OCI-LY7 (cell line): ENCODE measurements at regions of chr12 and their contacts with region 1.

Region 1: DNA sequence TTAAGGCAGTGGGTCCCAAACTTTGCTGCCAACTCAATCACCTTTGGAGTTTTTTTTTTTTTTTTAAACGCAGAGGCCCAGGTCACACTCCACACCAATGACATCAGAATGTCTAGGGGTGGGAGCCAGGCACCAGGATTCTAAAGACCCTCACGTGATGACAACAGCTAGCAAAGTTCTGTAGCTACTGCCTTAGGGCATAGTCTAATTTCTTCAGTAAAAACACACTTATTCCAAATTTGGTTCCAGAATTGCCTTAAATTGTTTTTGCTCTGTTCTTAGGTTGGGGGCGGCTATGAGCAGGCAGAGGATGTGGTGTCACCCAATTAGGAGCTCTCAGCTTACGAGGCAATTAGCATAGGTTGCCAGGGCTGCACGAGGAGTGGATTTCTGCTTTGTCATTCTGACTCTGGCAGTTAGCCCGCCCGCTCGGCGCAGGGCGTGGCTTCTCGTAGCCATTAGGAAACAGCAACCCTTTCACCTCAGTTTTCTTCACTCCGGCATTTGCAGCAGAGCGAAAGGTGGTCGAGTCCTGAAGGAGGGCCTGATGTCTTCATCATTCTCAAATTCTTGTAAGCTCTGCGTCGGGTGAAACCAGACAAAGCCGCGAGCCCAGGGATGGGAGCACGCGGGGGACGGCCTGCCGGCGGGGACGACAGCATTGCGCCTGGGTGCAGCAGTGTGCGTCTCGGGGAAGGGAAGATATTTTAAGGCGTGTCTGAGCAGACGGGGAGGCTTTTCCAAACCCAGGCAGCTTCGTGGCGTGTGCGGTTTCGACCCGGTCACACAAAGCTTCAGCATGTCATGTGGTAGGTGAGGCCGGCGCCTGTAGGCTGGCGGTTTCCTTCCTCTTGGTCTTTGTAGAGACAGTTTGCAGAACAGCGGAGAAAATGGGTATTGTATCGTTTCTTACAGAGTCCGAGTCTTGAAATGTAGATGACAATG is 16.7 kb upstream of the EID3 start:
- DNase-seq: peak; percentile 98
- H3K4me3 ChIP-seq: peak overlapping the region; percentile 99
- H3K27ac ChIP-seq: peak overlapping the region; percentile 95
- H3K4me1 ChIP-seq: peaks cover 27% of the 10 kb centered on the region
- CTCF ChIP-seq: 0 out of 2 replicates have a peak, but pooled peaks have one; percentile 18

Region 2: DNA sequence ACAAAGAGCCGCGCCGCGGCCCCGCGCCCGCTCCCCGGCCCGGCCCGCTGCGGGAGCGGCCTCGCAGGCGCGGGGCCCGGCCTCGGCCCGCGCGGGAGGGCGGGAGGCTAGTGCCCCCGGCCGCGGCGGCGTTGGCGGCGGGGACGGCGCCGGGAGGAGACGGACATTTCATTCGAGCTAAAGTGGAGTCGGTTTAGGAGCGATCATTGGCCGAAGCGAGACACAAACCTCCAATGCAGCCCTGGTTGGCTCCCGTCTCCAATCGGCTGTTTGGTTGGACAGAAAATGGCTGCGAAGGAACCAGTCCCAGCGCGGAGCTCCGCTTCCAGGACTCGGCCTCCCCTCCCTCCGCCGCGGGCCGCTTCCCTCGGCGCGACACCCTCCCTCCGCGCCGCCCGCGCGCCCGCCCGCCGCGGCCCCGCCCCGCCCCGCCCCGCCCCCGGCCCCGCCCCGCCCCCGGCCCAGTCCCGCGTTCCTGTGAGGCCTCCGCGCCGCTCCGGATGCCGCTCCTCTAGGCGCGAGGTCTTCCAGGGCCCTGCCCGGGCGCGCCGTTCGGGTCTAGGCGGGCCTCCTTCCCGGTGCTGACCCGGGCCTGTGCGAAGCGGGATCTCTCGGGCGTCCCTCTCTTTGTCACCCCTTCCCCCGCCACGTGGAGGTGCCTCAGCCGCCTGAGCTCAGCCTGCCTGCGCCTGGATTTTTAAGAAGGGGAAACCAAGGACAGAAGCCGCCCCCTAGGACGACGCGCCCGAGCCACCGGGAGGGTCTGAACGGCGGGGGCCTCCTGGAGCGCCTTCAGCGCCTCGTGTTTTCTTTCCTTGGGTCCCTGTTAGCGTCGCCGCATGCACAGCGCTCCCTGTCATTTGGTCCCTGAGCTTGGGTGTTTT is 148.7 kb before region 1 on chr12 and contains the start of gene NFYB:
- CTCF ChIA-PET with region 1: interaction called, 3 read pairs
- POLR2A ChIA-PET with region 1: interaction called, 6 read pairs
- intact Hi-C with region 1: loop called (anchors 1 kb)
- DNase-seq: peak; percentile 97
- H3K4me3 ChIP-seq: peak within 1 kb of the TSS; percentile 88
- H3K27ac ChIP-seq: peak within 1 kb of the TSS; percentile 82
- H3K4me1 ChIP-seq: peaks cover 31% of the 10 kb centered on the region
- CTCF ChIP-seq: no peak
- total RNA-seq, gene NFYB: 21.6 and 30.2 TPM in 2 replicates

Region 3: DNA sequence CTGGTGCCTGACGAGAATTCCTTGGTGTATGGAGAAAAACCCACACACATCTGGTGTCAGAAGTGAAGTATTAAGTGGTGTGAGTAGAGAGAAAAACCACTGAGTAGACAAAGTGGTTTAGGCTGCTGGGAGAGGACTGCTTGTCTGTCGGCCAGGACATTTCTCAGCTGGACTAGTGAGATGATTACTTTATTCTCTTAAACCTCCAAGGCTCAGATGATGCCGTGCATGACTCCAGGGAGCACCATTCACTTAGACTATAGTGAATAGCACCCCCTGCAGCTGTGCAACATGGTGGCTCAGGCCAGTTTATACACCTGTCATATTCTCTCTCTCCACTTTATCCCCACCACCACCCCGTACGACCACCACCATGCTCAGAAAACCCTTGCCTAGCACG is 120.3 kb before region 1 on chr12:
- CTCF ChIA-PET with region 1: no interaction called
- POLR2A ChIA-PET with region 1: no interaction called
- intact Hi-C with region 1: no loop called
- DNase-seq: no peak
- H3K4me3 ChIP-seq: no peak overlapping the region
- H3K27ac ChIP-seq: no peak overlapping the region
- H3K4me1 ChIP-seq: no peaks in the 10 kb centered on the region
- CTCF ChIP-seq: no peak

Region 4: GRCh38 chr12:104215638-104216297 is 71.0 kb before region 1 on chr12 and contains the start of gene TXNRD1:
- CTCF ChIA-PET with region 1: no interaction called
- POLR2A ChIA-PET with region 1: no interaction called
- intact Hi-C with region 1: no loop called
- DNase-seq: peak; percentile 47
- H3K4me3 ChIP-seq: no peak within 1 kb of the TSS
- H3K27ac ChIP-seq: no peak within 1 kb of the TSS
- H3K4me1 ChIP-seq: no peaks in the 10 kb centered on the region
- CTCF ChIP-seq: peak; percentile 70
- total RNA-seq, gene TXNRD1: 132 and 140 TPM in 2 replicates

Region 5: DNA sequence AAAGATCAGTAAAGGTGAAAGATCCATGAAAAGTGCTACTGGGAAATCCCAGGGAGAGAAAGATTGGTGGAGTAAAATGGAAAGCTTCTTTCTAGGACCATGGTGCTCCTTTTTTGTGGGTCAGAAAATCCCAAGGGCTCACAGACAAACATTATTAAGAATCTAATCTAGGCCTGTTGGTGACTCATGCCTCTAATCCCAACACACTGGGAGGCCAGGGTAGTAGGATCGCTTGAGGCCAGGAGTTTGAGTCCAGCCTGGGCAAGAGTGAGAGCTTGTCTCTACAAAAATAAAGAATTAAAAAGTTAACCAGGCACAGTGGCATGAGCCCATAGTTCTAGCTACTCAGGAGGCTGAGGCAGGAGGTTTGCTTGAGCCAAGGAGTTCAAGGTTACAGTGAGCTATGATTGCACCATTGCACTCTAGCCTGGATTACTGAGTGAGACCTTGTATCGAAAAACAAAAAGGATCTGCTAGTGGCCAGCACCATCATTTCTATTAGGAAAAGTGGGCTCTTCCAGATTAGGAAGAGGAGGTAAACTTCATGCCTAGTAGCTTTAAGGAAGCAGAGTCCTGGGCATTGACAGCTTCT is 28.2 kb before region 1 on chr12:
- CTCF ChIA-PET with region 1: no interaction called
- POLR2A ChIA-PET with region 1: no interaction called
- intact Hi-C with region 1: no loop called
- DNase-seq: no peak
- H3K4me3 ChIP-seq: no peak overlapping the region
- H3K27ac ChIP-seq: no peak overlapping the region
- H3K4me1 ChIP-seq: peaks cover under 1% of the 10 kb centered on the region
- CTCF ChIP-seq: no peak

Region 6: DNA sequence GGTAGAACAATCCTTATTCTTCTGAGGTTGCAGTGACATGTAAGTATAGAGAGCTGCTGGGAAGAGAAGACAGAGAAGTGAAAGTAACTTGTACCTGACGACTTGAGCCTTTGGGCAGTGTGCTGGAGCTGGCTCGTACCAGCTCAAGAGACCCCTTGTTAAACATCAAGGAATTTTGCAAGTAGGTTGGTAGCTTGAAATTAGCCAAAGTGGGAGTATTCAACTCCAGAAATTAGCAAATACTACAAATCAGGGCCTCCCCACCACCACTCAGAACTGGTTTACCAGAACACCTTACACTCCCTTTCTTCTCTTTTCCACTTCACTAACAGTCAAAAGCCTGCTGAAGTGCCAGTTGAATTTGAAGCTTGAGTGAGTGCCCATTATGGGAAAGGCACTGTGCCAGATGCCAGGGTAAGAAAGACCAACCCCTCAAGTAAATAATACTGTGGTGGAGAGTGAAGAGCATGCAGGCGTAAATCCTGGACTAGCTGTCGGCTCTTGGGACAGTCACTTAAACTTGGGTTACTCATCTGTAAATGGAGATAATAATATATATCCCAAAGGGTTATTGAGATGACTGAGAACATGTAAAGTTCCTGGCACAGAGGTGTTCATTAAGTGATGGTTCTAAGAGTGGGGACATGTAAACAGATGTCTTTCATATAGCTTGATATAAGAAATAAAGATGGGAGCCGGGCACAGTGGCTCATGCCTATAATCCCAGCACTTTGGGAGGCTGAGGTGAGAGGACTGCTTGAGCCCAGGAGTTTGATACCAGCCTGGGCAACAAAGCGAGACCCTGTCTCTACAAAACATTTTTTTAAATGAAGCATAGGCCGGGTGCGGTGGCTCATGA is 10.3 kb before region 1 on chr12:
- CTCF ChIA-PET with region 1: interaction called, 7 read pairs
- POLR2A ChIA-PET with region 1: interaction called, 72 read pairs
- intact Hi-C with region 1: no loop called
- DNase-seq: peak; percentile 65
- H3K4me3 ChIP-seq: peak overlapping the region; percentile 62
- H3K27ac ChIP-seq: peak overlapping the region; percentile 59
- H3K4me1 ChIP-seq: peaks cover 18% of the 10 kb centered on the region
- CTCF ChIP-seq: no peak

Region 7: DNA sequence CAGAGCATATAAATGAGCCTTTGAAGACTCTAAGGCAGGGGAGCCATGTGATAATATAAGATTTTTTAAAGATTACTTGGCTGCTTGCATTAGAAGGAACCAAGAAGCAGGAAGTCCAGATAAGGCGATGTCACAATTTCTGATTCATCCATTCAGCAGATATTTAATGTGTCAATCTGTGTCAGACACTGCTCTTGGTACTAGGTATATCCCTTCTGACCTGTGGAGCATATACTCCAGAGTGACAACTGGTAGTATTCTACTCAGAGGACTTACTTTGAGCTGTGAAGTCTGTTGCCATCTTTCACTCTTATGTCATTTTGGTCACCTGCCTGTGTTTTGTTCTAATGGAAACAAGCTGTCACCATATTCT is 27.4 kb after region 1 on chr12:
- CTCF ChIA-PET with region 1: no interaction called
- POLR2A ChIA-PET with region 1: interaction called, 16 read pairs
- intact Hi-C with region 1: no loop called
- DNase-seq: no peak
- H3K4me3 ChIP-seq: no peak overlapping the region
- H3K27ac ChIP-seq: no peak overlapping the region
- H3K4me1 ChIP-seq: no peaks in the 10 kb centered on the region
- CTCF ChIP-seq: no peak

Region 8: DNA sequence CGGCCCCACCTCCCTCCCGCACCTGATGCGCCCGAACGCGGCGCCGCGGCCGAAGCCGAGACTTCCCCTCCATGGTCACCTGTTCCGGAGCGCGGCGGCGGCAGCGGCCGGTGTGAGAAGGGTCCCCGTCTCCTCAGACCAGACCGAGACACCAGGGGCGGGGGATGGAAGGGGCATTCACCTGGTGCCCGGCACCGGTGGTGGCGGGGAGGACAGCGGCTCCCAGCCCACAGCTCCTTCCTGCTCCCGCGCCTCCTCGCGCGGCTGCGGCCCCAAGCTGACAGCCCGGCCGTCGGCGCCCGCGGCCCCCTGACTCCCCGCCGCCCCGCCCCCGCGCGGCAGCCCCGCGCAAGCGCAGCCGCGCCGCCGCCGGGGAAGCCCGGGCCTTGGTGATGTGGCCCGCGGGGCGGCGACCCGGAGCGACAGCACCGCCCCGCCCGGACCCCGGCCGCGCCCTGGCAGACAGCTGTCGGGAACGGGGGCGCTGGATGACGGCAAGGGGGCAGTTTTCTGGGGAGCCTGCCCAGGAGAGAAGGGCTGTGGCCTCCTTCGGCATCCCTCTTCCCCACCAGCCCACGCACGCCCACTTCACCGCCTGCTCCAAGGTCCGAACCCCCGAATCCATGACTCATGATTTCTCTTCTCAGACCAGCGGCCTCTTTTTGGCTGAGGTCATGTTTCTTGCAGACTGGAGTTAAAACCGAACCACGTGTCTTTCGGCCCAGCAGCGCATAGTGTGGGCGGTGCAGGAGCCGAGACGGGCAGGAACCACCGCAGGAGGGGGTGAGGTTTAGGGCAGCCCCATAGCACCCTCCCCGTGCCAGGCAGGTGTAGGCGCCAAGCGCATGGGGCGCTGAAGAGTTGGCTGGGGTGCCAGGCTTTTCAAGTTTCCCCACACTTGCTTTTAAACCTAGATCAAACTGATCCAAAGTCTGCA is 671.5 kb after region 1 on chr12 and contains the start of gene SLC41A2:
- CTCF ChIA-PET with region 1: no interaction called
- POLR2A ChIA-PET with region 1: no interaction called
- intact Hi-C with region 1: loop called (anchors 5 kb)
- DNase-seq: peak; percentile 84
- H3K4me3 ChIP-seq: peak within 1 kb of the TSS; percentile 78
- H3K27ac ChIP-seq: peak within 1 kb of the TSS; percentile 22
- H3K4me1 ChIP-seq: peaks cover 22% of the 10 kb centered on the region
- CTCF ChIP-seq: peak; percentile 64
- total RNA-seq, gene SLC41A2: 4.6 and 5.3 TPM in 2 replicates